Activated CD8-positive, alpha-beta T cell treated with anti-CD3 and anti-CD28 coated beads, Interleukin-2, amount 10 ng/mL, durations not matched to agents 7 days and 5 days (primary cell): ENCODE measurements at regions of chr2 and their contacts with region 1.

Region 1: GRCh38 chr2:196798980-196799379 is 503 bp downstream of the GTF3C3 start:
- DNase-seq: no peak
- ATAC-seq: peak; percentile 6
- H3K4me3 Mint-ChIP-seq: peak overlapping the region; percentile 94
- H3K27ac Mint-ChIP-seq: peak overlapping the region; percentile 94
- H3K4me1 Mint-ChIP-seq: peaks cover 30% of the 10 kb centered on the region
- H3K27me3 Mint-ChIP-seq: peaks cover 11% of the 10 kb centered on the region

Region 2: DNA sequence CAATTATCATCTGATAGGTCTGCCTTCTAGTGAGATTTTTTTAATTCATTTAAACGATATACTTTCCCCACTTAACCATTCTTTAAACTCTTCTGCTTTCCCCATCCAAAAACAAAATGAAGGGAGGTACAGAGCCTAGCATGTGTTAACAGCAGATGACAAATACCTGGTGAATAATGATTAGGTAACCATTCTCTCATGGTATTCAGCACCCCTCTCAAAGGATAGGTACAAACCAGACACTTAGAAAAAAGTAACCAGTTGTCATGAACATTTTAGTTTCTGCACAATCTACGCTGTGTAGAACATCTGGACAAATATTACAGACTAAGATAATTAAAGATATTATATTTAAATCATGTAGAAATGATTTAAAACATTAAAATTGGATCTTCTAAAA is 786.7 kb before region 1 on chr2:
- CTCF ChIA-PET with region 1: no interaction called
- POLR2A ChIA-PET with region 1: no interaction called
- DNase-seq: no peak
- ATAC-seq: no peak
- H3K4me3 Mint-ChIP-seq: no peak overlapping the region
- H3K27ac Mint-ChIP-seq: no peak overlapping the region
- H3K4me1 Mint-ChIP-seq: no peaks in the 10 kb centered on the region
- H3K27me3 Mint-ChIP-seq: peaks cover 4% of the 10 kb centered on the region

Region 3: DNA sequence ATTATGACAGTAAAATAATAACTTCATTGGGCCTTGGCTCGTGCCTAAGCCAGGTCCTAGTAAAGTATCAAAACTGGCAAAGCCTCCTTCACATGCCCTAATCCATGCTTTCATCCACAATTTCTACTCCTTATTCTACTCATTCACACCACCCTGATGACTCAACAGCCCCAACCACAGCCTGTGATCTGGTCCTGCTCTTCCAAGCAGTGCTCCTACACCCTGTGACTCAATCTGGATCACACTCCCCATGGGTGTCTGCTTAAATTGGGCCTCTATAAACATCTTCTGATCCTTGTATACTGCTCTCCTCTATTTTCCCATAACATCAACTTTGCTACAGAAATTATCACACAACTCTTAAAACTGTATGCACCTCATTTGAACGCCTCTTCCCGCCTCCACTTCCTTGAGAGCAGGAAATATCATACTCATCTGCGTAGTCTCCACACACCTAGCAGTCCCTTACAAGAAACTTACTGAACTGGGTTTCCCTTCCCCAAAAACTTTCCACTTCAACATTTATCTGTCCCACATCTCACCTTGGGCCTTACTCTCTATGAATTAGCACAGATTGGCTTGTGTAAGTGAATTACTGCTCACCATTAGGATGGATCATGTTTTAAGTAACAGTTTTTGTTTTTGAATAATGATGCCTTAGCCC is 15.4 kb before region 1 on chr2:
- CTCF ChIA-PET with region 1: interaction called, 12 read pairs
- POLR2A ChIA-PET with region 1: no interaction called
- DNase-seq: no peak
- ATAC-seq: no peak
- H3K4me3 Mint-ChIP-seq: no peak overlapping the region
- H3K27ac Mint-ChIP-seq: peak overlapping the region; percentile 43
- H3K4me1 Mint-ChIP-seq: peaks cover 7% of the 10 kb centered on the region
- H3K27me3 Mint-ChIP-seq: no peaks in the 10 kb centered on the region